ENCODE measurements at regions of chr2 and their contacts with region 1.

Region 1: GRCh38 chr2:171271971-171272436 is 111.3 kb upstream of the TLK1 start:
- DNase-seq: no peak
- H3K4me3 ChIP-seq: no peak overlapping the region
- H3K27ac ChIP-seq: peak overlapping the region; percentile 50 to 76 (median 63)
- H3K4me1 ChIP-seq: peaks cover 12 to 24% (median 23%) of the 10 kb centered on the region in 4 donors
- H3K27me3 ChIP-seq: no peaks in the 10 kb centered on the region
- CTCF ChIP-seq: no peak
- EP300 ChIP-seq: no peak
- POLR2A ChIP-seq: no peak

Region 2: DNA sequence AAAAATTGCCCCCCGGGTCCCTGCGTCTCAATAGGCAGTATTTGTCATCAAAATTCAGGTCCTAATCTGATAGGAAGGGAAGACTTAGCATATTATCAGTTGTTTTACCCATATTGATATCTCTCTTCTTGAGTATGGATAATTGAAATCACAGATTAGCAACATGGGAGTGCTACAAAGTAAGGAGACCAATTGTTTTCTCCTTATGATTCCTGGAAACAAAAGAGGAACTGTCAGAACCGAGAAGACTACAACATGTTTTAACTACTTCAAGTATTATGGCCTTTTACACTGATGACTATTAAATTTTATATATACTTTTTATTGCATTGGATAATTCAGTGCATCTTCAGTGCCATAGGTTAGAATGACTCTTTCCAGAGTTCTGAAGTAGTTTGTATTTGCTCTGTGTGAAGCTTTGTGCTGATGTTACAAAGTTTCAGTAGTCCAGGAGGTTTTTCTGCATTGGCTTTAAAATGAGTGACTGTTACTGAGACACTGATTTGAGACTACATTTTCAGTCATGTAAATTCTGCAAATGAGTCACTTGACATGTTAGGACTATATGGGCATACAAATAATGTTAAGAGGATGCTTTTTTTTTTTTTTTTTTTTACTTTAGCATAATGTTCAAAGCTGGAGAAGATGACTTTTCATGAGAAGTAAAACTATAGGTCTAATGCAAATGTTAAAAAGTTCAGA is 91.6 kb before region 1 on chr2:
- intact Hi-C with region 1: no loop called
- DNase-seq: no peak
- H3K4me3 ChIP-seq: no peak overlapping the region
- H3K27ac ChIP-seq: no peak overlapping the region
- H3K4me1 ChIP-seq: peaks cover 0 to 6% (median 4%) of the 10 kb centered on the region in 4 donors
- H3K27me3 ChIP-seq: no peaks in the 10 kb centered on the region
- CTCF ChIP-seq: no peak
- EP300 ChIP-seq: no peak
- POLR2A ChIP-seq: no peak

Region 3: GRCh38 chr2:171416009-171416926 is 144.3 kb after region 1 on chr2:
- intact Hi-C with region 1: loop called (anchors 10 kb)
- DNase-seq: peak; percentile 93
- H3K4me3 ChIP-seq: peak overlapping the region in 1 of 4 donors; percentile 10
- H3K27ac ChIP-seq: peak overlapping the region; percentile 56 to 72 (median 63)
- H3K4me1 ChIP-seq: peaks cover 4 to 30% (median 20%) of the 10 kb centered on the region in 4 donors
- H3K27me3 ChIP-seq: no peaks in the 10 kb centered on the region
- CTCF ChIP-seq: peak; percentile 82 to 90 (median 86)
- EP300 ChIP-seq: no peak
- POLR2A ChIP-seq: no peak